Heart left ventricle (tissue), 16 donors: ENCODE measurements at regions of chr2 and their contacts with region 1.

Region 1: GRCh38 chr2:88159955-88160415 is 10.2 kb upstream of the THNSL2 start:
- DNase-seq: peak in 3 of 5 donors; percentile 21 to 49 (median 35)
- ATAC-seq: peak in 3 of 4 donors; percentile 62 to 73 (median 63)
- H3K4me3 ChIP-seq: no peak overlapping the region
- H3K27ac ChIP-seq: no peak overlapping the region
- H3K4me1 ChIP-seq: peaks cover 0 to 3% (median 0%) of the 10 kb centered on the region in 12 donors
- H3K27me3 ChIP-seq: no peaks in the 10 kb centered on the region
- CTCF ChIP-seq: peak; percentile 73 to 90 (median 86)
- POLR2A ChIP-seq: no peak

Region 2: GRCh38 chr2:88059979-88060906 is 99.7 kb before region 1 on chr2:
- intact Hi-C with region 1: loop called (anchors 1 to 5 kb)
- DNase-seq: no peak
- ATAC-seq: peak in 1 of 4 donors; percentile 34
- H3K4me3 ChIP-seq: no peak overlapping the region
- H3K27ac ChIP-seq: no peak overlapping the region
- H3K4me1 ChIP-seq: peaks cover 0 to 6% (median 4%) of the 10 kb centered on the region in 12 donors
- H3K27me3 ChIP-seq: no peaks in the 10 kb centered on the region
- CTCF ChIP-seq: peak; percentile 62 to 86 (median 74)
- POLR2A ChIP-seq: no peak

Region 3: DNA sequence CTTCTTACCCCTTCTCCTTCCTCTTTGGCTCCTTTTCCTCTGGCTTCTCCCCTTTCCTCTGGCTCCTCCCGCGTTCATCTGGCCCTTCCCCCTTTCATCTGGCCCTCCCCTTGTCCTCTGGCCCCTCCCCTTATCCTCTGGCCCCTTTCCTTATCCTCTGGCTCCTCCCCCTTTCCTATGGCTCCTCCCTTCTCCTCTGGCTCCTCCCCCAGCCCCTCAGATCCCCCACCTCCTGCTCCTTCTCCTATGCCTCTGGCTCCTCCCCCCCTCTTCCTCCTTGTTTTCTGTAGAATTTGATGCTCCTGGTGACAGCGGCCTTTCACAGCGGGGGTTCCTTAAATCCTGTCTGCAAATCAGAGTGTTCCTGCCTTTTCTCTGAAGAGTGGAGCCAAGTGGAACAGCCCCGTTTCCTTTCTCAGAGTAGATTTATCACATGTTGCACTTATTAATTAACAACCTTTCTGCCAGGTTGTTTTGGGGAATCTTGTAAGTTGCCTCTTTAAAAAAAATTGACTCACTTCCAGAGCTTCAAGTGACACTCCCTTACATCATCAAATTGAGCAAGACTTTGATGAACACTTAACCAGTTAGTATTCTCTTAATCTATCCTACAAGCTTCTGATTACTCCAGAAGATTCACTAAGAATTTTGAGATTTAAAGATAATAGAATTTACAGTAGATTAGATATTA is 60.0 kb before region 1 on chr2:
- intact Hi-C with region 1: no loop called
- DNase-seq: no peak
- ATAC-seq: peak in 3 of 4 donors; percentile 34 to 56 (median 47)
- H3K4me3 ChIP-seq: no peak overlapping the region
- H3K27ac ChIP-seq: peak overlapping the region in 6 of 12 donors; percentile 6 to 39 (median 26)
- H3K4me1 ChIP-seq: peaks cover 0 to 35% (median 8%) of the 10 kb centered on the region in 12 donors
- H3K27me3 ChIP-seq: no peaks in the 10 kb centered on the region
- CTCF ChIP-seq: no peak
- POLR2A ChIP-seq: no peak